Activated T-helper 2 cell treated with anti-CD3 and anti-CD28 coated beads, Interferon-gamma antibody, Interleukin-2, Interleukin-4, amounts not matched to agents 10 μg/mL and 5 μg/mL and 100 μg/mL, durations not matched to agents 14 hours and 24 hours and 36 hours (primary cell): ENCODE measurements at regions of chr15 and their contacts with region 1.

Region 1: GRCh38 chr15:45205192-45205591 is 17.4 kb upstream of the SHF start:
- DNase-seq: peak; percentile 57
- H3K4me3 Mint-ChIP-seq: no peak overlapping the region
- H3K27ac Mint-ChIP-seq: no peak overlapping the region
- H3K4me1 Mint-ChIP-seq: peaks cover 6% of the 10 kb centered on the region
- H3K27me3 Mint-ChIP-seq: peaks cover 20% of the 10 kb centered on the region

Region 2: GRCh38 chr15:45279024-45279698 is 74.0 kb after region 1 on chr15:
- intact Hi-C with region 1: loop called (anchors 2 kb)
- DNase-seq: peak; percentile 95
- H3K4me3 Mint-ChIP-seq: peak overlapping the region; percentile 91
- H3K27ac Mint-ChIP-seq: peak overlapping the region; percentile 81
- H3K4me1 Mint-ChIP-seq: peaks cover 9% of the 10 kb centered on the region
- H3K27me3 Mint-ChIP-seq: peaks cover 7% of the 10 kb centered on the region